Activated T-helper 1 cell treated with anti-CD3 and anti-CD28 coated beads, Interleukin-12 subunit alpha, Interleukin-12 subunit beta, Interleukin-2, Interleukin-4 antibody, amounts not matched to agents 30 ng/mL and 10 ng/mL and 1 ng/mL, durations not matched to agents 14 hours and 24 hours and 36 hours (primary cell): ENCODE measurements at regions of chr5 and their contacts with region 1.

Region 1: GRCh38 chr5:137629646-137630045 is 106.2 kb downstream of the KLHL3 start:
- DNase-seq: no peak
- H3K4me3 Mint-ChIP-seq: no peak overlapping the region
- H3K27ac Mint-ChIP-seq: no peak overlapping the region
- H3K4me1 Mint-ChIP-seq: no peaks in the 10 kb centered on the region
- H3K27me3 Mint-ChIP-seq: no peaks in the 10 kb centered on the region

Region 2: GRCh38 chr5:137660349-137660817 is 30.7 kb after region 1 on chr5:
- intact Hi-C with region 1: loop called (anchors 1 kb)
- DNase-seq: peak; percentile 50
- H3K4me3 Mint-ChIP-seq: no peak overlapping the region
- H3K27ac Mint-ChIP-seq: no peak overlapping the region
- H3K4me1 Mint-ChIP-seq: peaks cover 3% of the 10 kb centered on the region
- H3K27me3 Mint-ChIP-seq: no peaks in the 10 kb centered on the region

Region 3: DNA sequence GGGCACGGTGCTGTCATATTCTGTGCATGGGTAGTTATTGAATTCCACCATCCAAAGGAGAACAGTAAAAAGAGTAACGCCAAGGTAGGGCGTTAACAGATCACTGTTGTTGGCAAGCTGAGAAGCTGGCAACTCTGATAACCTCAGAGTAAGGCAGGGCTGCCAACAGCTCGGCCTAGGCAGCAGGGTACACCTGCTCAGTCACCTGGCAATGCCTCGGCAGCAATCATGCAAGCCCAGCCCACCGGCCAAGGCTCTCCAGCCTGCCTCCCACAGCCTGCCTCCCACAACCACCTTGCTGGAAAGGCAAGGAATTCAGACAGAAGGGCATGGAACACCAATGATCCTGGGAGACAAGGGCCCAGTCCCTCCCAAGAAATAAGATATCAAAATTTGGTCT is 42.4 kb after region 1 on chr5:
- intact Hi-C with region 1: no loop called
- DNase-seq: no peak
- H3K4me3 Mint-ChIP-seq: no peak overlapping the region
- H3K27ac Mint-ChIP-seq: no peak overlapping the region
- H3K4me1 Mint-ChIP-seq: no peaks in the 10 kb centered on the region
- H3K27me3 Mint-ChIP-seq: peaks cover 8% of the 10 kb centered on the region

Region 4: GRCh38 chr5:137743031-137743640 is 113.5 kb after region 1 on chr5:
- intact Hi-C with region 1: loop called (anchors 1 kb)
- DNase-seq: peak; percentile 54
- H3K4me3 Mint-ChIP-seq: no peak overlapping the region
- H3K27ac Mint-ChIP-seq: no peak overlapping the region
- H3K4me1 Mint-ChIP-seq: no peaks in the 10 kb centered on the region
- H3K27me3 Mint-ChIP-seq: peaks cover 2% of the 10 kb centered on the region

Region 5: DNA sequence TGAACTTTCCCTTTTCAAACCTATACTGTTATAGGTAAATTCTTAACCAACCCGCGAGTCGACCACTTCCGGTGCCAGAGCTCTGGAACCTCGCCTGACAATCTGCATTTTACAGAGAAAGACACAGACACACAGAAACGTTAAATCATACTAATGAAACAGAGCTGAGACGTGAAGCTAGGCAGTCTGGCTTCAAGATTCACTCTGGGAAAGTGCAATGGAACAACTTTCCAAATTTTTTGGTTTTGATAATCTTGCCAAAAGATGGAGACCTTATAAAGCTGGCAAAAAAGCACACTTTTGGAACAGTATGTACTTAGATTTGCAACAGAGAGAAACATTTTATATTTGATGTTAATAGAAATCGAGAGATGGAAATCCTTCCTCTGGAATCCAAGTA is 438.3 kb after region 1 on chr5:
- intact Hi-C with region 1: loop called (anchors 1 kb)
- DNase-seq: no peak
- H3K4me3 Mint-ChIP-seq: no peak overlapping the region
- H3K27ac Mint-ChIP-seq: no peak overlapping the region
- H3K4me1 Mint-ChIP-seq: peaks cover 14% of the 10 kb centered on the region
- H3K27me3 Mint-ChIP-seq: no peaks in the 10 kb centered on the region